Activated B cell treated with CpG ODN at 0.5 μM for 24 hours (primary cell): ENCODE measurements at regions of chr19 and their contacts with region 1.

Region 1: GRCh38 chr19:49391581-49392399 is 3.7 kb downstream of the KASH5 start:
- DNase-seq: peak; percentile 67
- ATAC-seq: peak; percentile 51
- H3K4me3 Mint-ChIP-seq: peak overlapping the region; percentile 42
- H3K27ac Mint-ChIP-seq: peak overlapping the region; percentile 84
- H3K4me1 Mint-ChIP-seq: peaks cover 46% of the 10 kb centered on the region
- H3K27me3 Mint-ChIP-seq: no peaks in the 10 kb centered on the region
- CTCF ChIP-seq: peak; percentile 25

Region 2: DNA sequence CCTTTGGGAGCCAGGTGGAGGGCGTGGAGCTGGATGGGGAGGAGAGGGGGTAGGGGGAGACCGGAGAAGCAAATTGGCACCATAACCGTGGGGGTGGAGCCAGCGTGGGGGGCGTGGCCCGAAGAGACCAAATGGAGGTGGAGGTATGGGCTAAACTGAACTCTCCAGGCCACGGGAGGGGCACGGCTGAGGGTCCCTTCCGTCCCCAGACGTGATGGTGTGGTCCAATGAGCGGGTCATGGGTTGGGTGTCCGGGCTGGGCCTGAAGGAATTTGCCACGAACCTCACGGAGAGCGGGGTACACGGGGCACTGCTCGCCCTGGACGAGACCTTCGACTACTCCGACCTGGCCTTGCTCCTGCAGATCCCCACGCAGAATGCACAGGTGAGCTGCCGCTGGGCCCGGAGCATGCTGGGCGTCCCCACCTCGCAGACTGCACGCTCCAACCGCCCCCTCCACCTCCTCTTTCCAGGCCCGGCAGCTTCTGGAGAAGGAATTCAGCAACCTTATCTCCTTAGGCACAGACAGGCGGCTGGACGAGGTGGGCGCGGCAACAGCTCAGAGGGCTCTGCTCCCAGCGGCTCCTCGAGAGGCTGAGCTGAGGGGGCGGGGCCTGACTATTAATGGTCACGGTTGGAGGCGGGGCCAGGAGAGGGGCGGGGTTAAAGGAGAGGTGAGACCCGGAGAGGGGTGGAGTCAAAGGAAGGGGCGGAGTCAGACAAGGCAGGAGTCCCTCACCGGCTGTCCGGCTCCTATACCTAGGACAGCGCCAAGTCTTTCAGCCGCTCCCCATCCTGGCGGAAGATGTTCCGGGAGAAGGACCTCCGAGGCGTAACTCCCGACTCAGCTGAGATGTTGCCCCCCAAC is 242.8 kb before region 1 on chr19:
- CTCF ChIA-PET with region 1: no interaction called
- POLR2A ChIA-PET with region 1: no interaction called
- intact Hi-C with region 1: no loop called
- DNase-seq: peak; percentile 72
- ATAC-seq: peak; percentile 66
- H3K4me3 Mint-ChIP-seq: peak overlapping the region; percentile 82
- H3K27ac Mint-ChIP-seq: no peak overlapping the region
- H3K4me1 Mint-ChIP-seq: peaks cover 37% of the 10 kb centered on the region
- H3K27me3 Mint-ChIP-seq: peaks cover 50% of the 10 kb centered on the region
- CTCF ChIP-seq: no peak

Region 3: GRCh38 chr19:49272184-49272583 is 119.6 kb before region 1 on chr19:
- CTCF ChIA-PET with region 1: interaction called, 4 read pairs
- POLR2A ChIA-PET with region 1: no interaction called
- intact Hi-C with region 1: loop called (anchors 2 kb)
- DNase-seq: no peak
- ATAC-seq: no peak
- H3K4me3 Mint-ChIP-seq: no peak overlapping the region
- H3K27ac Mint-ChIP-seq: no peak overlapping the region
- H3K4me1 Mint-ChIP-seq: no peaks in the 10 kb centered on the region
- H3K27me3 Mint-ChIP-seq: peaks cover 11% of the 10 kb centered on the region
- CTCF ChIP-seq: no peak

Region 4: GRCh38 chr19:49326165-49326704 is 65.6 kb before region 1 on chr19:
- CTCF ChIA-PET with region 1: interaction called, 3 read pairs
- POLR2A ChIA-PET with region 1: interaction called, 15 read pairs
- intact Hi-C with region 1: no loop called
- DNase-seq: no peak
- ATAC-seq: peak; percentile 51
- H3K4me3 Mint-ChIP-seq: peak overlapping the region; percentile 56
- H3K27ac Mint-ChIP-seq: peak overlapping the region; percentile 100
- H3K4me1 Mint-ChIP-seq: peaks cover 84% of the 10 kb centered on the region
- H3K27me3 Mint-ChIP-seq: no peaks in the 10 kb centered on the region
- CTCF ChIP-seq: no peak

Region 5: GRCh38 chr19:49340069-49340864 is 51.5 kb before region 1 on chr19:
- CTCF ChIA-PET with region 1: interaction called, 7 read pairs
- POLR2A ChIA-PET with region 1: interaction called, 96 read pairs
- intact Hi-C with region 1: loop called (anchors 2 kb)
- DNase-seq: peak; percentile 93
- ATAC-seq: peak; percentile 72
- H3K4me3 Mint-ChIP-seq: peak overlapping the region; percentile 80
- H3K27ac Mint-ChIP-seq: peak overlapping the region; percentile 93
- H3K4me1 Mint-ChIP-seq: peaks cover 83% of the 10 kb centered on the region
- H3K27me3 Mint-ChIP-seq: no peaks in the 10 kb centered on the region
- CTCF ChIP-seq: no peak

Region 6: DNA sequence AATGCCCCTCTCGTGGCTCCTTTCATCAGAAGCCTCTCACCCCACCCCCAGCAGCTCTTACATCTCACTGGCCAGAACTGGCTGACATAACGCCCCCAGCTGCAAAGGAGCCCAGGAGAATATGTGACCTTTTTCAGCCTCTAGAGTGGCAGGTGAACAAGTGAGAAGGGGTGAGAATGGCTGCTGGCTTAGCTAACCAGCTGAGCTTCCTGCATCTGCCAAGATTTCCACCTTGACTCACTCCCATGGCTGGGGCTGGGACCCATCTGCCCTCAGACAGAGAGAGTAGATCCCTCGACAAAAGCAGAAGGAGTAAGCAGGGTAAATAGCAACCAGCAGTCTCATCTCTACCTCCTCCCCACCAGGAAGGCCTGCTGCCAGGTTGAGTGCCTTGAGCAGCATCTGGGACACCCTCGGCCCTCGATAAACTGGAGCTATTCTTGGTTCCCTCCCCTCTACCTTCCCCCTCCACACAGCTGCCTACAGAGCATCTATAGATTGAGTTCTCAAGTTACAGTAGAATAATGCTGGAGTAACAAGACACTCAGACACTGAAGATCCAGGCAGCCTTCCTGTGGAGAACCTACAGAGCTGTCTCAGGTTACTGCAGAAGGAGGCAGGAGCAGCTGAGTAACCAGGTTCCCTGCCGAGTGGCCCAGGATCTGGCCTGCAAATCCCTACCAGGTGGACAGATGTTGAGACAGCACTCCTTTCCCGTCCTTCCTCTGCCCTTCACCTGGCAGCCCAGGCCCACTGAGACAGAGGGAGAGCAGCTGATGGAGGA is 11.8 kb after region 1 on chr19:
- CTCF ChIA-PET with region 1: interaction called, 7 read pairs
- POLR2A ChIA-PET with region 1: interaction called, 8 read pairs
- intact Hi-C with region 1: loop called (anchors 1 kb)
- DNase-seq: no peak
- ATAC-seq: peak; percentile 87
- H3K4me3 Mint-ChIP-seq: no peak overlapping the region
- H3K27ac Mint-ChIP-seq: peak overlapping the region; percentile 77
- H3K4me1 Mint-ChIP-seq: peaks cover 28% of the 10 kb centered on the region
- H3K27me3 Mint-ChIP-seq: no peaks in the 10 kb centered on the region
- CTCF ChIP-seq: no peak

Region 7: GRCh38 chr19:49443366-49444099 is 51.7 kb after region 1 on chr19:
- CTCF ChIA-PET with region 1: interaction called, 28 read pairs
- POLR2A ChIA-PET with region 1: interaction called, 10 read pairs
- intact Hi-C with region 1: loop called (anchors 1 kb)
- DNase-seq: peak; percentile 94
- ATAC-seq: peak; percentile 85
- H3K4me3 Mint-ChIP-seq: peak overlapping the region; percentile 86
- H3K27ac Mint-ChIP-seq: peak overlapping the region; percentile 90
- H3K4me1 Mint-ChIP-seq: peaks cover 39% of the 10 kb centered on the region
- H3K27me3 Mint-ChIP-seq: peaks cover 34% of the 10 kb centered on the region
- CTCF ChIP-seq: peak; percentile 77

Region 8: DNA sequence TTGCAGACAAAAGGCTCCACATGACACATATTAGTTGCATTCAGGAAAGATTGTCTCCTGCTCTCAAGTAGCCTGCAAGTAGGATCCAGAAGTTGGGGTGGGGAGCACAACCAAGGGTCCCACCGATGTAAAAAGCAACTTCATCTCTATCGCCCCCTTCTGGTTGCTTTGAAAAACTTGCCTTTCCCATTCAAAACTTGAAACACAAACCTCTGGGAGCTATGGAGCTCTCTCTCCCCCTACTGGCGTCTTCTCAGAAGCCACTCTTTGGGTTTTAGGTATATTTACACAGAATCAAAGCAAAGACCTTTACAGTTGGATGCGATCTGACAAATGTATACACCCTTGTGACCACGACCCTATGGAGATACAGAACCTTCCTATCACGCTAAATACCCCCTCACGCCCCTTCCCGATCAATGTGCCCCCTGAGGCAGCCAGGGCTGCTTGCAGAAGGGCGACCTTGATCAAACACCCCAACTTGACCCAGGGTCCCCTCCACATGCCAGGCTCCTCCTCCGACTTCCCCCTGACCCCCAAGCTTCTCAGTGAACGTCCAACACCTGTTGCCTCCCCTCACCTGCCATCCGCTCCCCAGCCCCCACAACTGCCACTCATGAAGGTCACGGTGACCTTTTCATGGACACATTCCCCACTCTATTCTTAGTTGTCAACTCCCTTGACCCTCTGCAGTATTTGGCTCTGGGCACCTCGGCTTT is 178.5 kb after region 1 on chr19:
- CTCF ChIA-PET with region 1: interaction called, 3 read pairs
- POLR2A ChIA-PET with region 1: no interaction called
- intact Hi-C with region 1: loop called (anchors 1 kb)
- DNase-seq: no peak
- ATAC-seq: peak; percentile 93
- H3K4me3 Mint-ChIP-seq: peak overlapping the region; percentile 41
- H3K27ac Mint-ChIP-seq: peak overlapping the region; percentile 53
- H3K4me1 Mint-ChIP-seq: peaks cover 30% of the 10 kb centered on the region
- H3K27me3 Mint-ChIP-seq: no peaks in the 10 kb centered on the region
- CTCF ChIP-seq: peak; percentile 98